GM12878 (cell line): ENCODE measurements at regions of chr5 and their contacts with region 1.

Region 1: GRCh38 chr5:99032234-99033013 is 103.6 kb upstream of the CHD1 start:
- DNase-seq: no peak
- ATAC-seq: peak; percentile 56
- H3K4me3 ChIP-seq: peak overlapping the region; percentile 33
- H3K27ac ChIP-seq: peak overlapping the region; percentile 69
- H3K4me1 ChIP-seq: peaks cover 46% of the 10 kb centered on the region
- H3K27me3 ChIP-seq: no peaks in the 10 kb centered on the region
- CTCF ChIP-seq: peak; percentile 60 to 85 (median 79)
- EP300 ChIP-seq: no peak
- POLR2A ChIP-seq: no peak
- RAD21 ChIP-seq: peak; percentile 99

Region 2: DNA sequence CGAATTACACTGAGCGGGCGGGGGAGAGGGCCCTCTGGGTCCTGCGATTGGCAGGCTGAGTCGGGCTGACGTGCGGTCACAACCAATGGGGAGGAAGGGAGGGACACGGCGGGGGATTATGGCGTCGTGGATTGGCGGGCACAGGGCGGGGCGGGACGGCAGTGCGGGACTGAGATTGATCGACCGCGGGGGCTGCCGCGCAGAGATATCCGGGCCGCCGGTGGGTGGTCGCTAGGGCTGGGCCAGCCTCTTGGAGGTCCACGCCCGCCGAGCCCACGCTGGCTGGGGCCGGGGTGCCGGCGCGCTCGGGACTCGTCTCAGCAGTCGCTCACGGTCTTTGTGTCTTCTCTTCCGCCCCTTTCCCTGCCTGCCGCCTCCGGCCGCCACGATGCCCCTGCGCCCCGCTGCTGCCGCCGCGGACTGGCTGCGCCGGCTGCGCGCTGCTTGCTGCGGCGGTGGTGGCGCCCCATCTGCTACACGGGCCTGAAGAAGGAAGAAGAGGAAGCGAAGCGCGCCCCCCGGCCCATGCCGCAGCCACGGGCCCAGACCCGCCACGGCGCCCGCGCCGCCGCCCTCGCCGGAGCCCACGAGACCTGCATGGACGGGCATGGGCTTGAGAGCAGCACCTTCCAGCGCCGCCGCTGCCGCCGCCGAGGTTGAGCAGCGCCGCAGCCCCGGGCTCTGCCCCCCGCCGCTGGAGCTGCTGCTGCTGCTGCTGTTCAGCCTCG is 258.8 kb before region 1 on chr5 and contains the start of gene RGMB:
- CTCF ChIA-PET with region 1: interaction called, 21 read pairs
- POLR2A ChIA-PET with region 1: no interaction called
- RAD21 ChIA-PET with region 1: interaction called, 4 read pairs
- SMC1A ChIA-PET with region 1: interaction called, 3 read pairs
- in situ Hi-C with region 1: loop called (anchors 10 kb)
- intact Hi-C with region 1: loop called (anchors 2 kb)
- DNase-seq: peak; percentile 85
- ATAC-seq: peak; percentile 89
- H3K4me3 ChIP-seq: peak within 1 kb of the TSS; percentile 93
- H3K27ac ChIP-seq: peak within 1 kb of the TSS; percentile 62
- H3K4me1 ChIP-seq: peaks cover 17% of the 10 kb centered on the region
- H3K27me3 ChIP-seq: peaks cover 2 to 5% of the 10 kb centered on the region in 2 experiments; a peak in 3 of 4 replicates
- CTCF ChIP-seq: no peak
- EP300 ChIP-seq: no peak
- POLR2A ChIP-seq: peak; percentile 86
- RAD21 ChIP-seq: no peak
- polyA plus RNA-seq, gene RGMB: 1.3 to 2.4 TPM

Region 3: GRCh38 chr5:98898743-98899142 is 133.7 kb before region 1 on chr5:
- CTCF ChIA-PET with region 1: interaction called, 46 read pairs
- POLR2A ChIA-PET with region 1: interaction called, 8 read pairs
- RAD21 ChIA-PET with region 1: interaction called, 26 read pairs
- SMC1A ChIA-PET with region 1: interaction called, 43 read pairs
- in situ Hi-C with region 1: loop called (anchors 10 kb)
- intact Hi-C with region 1: no loop called
- DNase-seq: no peak
- ATAC-seq: no peak
- H3K4me3 ChIP-seq: no peak overlapping the region
- H3K27ac ChIP-seq: no peak overlapping the region
- H3K4me1 ChIP-seq: no peaks in the 10 kb centered on the region
- H3K27me3 ChIP-seq: no peaks in the 10 kb centered on the region
- CTCF ChIP-seq: no peak
- EP300 ChIP-seq: no peak
- POLR2A ChIP-seq: no peak
- RAD21 ChIP-seq: no peak

Region 4: DNA sequence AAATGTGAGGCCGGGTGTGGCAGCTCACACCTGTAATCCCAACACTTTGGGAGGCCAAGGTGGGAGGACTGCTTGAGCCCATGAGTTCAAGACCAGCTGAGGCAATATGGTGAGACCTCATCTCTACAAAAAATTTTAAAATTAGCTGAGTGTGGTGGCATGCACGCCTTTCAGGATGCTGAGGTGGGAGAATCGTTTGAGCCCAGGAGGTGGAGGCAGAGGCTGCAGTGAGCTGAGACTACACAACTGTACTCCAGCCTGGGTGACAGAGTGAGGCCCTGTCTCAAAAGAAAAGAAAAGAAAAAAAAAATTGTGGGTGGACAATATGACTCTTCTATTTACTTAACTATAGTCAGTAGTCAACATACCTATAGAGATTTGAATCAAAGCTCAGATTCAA is 108.5 kb before region 1 on chr5:
- CTCF ChIA-PET with region 1: interaction called, 20 read pairs
- POLR2A ChIA-PET with region 1: interaction called, 23 read pairs
- RAD21 ChIA-PET with region 1: interaction called, 11 read pairs
- SMC1A ChIA-PET with region 1: interaction called, 39 read pairs
- in situ Hi-C with region 1: loop called (anchors 5 kb)
- intact Hi-C with region 1: loop called (anchors 1 kb)
- DNase-seq: no peak
- ATAC-seq: no peak
- H3K4me3 ChIP-seq: no peak overlapping the region
- H3K27ac ChIP-seq: no peak overlapping the region
- H3K4me1 ChIP-seq: no peaks in the 10 kb centered on the region
- H3K27me3 ChIP-seq: no peaks in the 10 kb centered on the region
- CTCF ChIP-seq: peak in 1 of 3 experiments; percentile 3; a peak in 1 of 6 replicates
- EP300 ChIP-seq: no peak
- POLR2A ChIP-seq: no peak
- RAD21 ChIP-seq: no peak

Region 5: DNA sequence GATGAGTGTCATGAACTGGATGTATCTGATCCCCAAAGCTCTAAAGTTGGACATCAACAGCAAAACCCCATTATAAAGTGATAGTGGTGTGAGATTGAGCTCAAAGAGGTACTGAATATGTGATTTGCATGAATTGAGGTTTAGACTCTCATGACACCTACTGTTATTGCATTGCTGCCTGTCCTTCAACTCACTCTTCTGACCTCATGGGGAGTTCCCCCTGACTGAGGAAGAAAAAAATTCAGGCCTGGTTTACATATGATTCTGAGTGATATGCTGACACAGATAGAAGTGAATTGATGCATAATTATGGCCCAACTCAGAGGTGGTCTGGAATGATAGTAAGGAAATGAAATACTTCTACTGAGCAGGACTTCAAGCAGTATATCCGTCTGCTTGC is 27.5 kb before region 1 on chr5:
- CTCF ChIA-PET with region 1: interaction called, 6 read pairs
- POLR2A ChIA-PET with region 1: interaction called, 3 read pairs
- RAD21 ChIA-PET with region 1: interaction called, 13 read pairs
- SMC1A ChIA-PET with region 1: interaction called, 5 read pairs
- in situ Hi-C with region 1: no loop called
- intact Hi-C with region 1: loop called (anchors 2 kb)
- DNase-seq: peak; percentile 61
- ATAC-seq: peak; percentile 98
- H3K4me3 ChIP-seq: no peak overlapping the region
- H3K27ac ChIP-seq: no peak overlapping the region
- H3K4me1 ChIP-seq: peaks cover 8% of the 10 kb centered on the region
- H3K27me3 ChIP-seq: no peaks in the 10 kb centered on the region
- CTCF ChIP-seq: no peak; a peak in 1 of 6 replicates
- EP300 ChIP-seq: peak; percentile 38 to 72; a peak in 1 of 4 replicates
- POLR2A ChIP-seq: no peak
- RAD21 ChIP-seq: no peak